ENCODE measurements at regions of chr12 and their contacts with region 1.

Region 1: GRCh38 chr12:26651566-26652188 is 181.3 kb downstream of the ITPR2 start:
- DNase-seq: no peak
- H3K4me3 ChIP-seq: no peak overlapping the region
- H3K27ac ChIP-seq: no peak overlapping the region
- H3K4me1 ChIP-seq: no peaks in the 10 kb centered on the region
- H3K27me3 ChIP-seq: no peaks in the 10 kb centered on the region
- CTCF ChIP-seq: peak; percentile 47 to 76 (median 72)
- POLR2A ChIP-seq: no peak

Region 2: DNA sequence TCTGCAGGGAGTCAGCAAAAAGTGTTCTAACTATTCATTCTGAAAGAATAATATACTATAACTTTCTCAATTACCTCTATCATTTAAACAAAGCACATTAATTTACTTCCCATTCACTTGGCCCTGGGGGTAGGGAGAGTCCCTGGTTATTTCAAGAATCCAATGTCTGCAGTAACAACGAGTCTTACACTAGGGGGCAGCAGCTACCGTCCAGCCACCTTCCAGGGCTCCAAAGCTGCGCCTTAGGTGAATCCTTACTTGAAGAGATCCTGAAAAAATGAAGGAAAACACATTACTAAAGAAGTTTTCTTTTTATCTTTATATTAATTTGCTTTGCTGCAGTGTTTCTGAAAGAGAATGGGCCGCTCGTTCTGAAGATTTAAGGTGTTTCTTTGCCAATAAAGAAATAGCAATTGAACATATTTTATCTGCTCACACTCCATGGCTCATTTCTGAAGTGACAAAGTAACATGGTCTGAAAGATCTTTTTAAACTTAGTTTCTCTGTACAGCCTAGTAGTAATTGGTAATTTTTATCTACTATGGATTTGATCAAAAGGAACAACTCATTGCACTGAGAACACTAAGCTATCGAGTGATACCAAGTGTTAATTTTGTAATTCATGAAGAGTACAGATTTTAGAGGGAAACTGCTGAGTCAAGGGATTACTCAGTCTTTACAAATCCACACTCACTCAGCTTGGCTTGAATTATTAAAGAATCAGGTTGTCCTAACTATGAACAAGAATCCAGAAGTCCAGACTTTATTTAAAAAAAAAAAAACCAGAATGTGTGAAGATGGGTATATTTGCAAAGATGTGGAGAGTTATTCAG is 554.4 kb before region 1 on chr12:
- intact Hi-C with region 1: loop called (anchors 5 kb)
- DNase-seq: peak; percentile 84
- H3K4me3 ChIP-seq: no peak overlapping the region
- H3K27ac ChIP-seq: no peak overlapping the region
- H3K4me1 ChIP-seq: peaks cover 0 to 7% (median 0%) of the 10 kb centered on the region in 6 donors
- H3K27me3 ChIP-seq: no peaks in the 10 kb centered on the region
- CTCF ChIP-seq: peak; percentile 64 to 92 (median 87)
- POLR2A ChIP-seq: no peak

Measured in spleen (tissue), 13 donors.